ENCODE measurements at regions of chr2 and their contacts with region 1.

Region 1: DNA sequence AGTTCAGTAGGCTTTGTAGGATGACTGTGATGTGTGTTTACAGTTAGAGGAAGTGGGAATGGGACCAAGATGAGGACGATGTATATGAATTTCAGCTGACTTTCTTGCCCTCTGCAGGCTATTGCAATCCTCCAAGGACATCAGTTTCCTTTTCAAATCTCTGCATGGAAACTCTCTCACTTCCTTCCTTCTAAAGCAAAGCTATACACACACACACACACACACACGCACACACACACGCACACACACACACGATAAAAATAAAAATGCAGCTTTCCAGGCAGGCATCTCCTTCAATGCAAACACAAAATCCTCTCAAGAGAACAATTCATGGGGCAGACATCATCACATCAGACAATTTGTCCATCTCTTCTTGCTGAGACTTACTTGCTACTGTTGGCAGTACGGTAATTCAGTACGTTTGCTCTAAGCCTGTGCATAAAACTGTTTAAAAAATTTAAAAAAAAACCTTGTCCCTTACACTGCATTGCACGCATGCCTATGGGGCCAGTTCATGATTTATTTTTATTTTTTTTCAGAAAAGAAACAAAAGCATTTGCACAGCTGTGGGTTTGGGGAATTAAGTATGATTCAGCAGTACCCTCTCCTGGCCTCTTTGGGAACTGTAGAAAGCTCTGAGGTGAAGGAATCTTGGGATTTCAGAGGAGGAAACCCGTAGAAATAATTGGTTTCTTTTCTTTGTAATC is 27.1 kb upstream of the ICOS start:
- DNase-seq: peak in 1 of 2 experiments; percentile 10
- H3K4me3 ChIP-seq: no peak overlapping the region
- H3K27ac ChIP-seq: no peak overlapping the region
- H3K4me1 ChIP-seq: no peaks in the 10 kb centered on the region
- H3K27me3 ChIP-seq: no peaks in the 10 kb centered on the region
- CTCF ChIP-seq: peak; percentile 74

Region 2: DNA sequence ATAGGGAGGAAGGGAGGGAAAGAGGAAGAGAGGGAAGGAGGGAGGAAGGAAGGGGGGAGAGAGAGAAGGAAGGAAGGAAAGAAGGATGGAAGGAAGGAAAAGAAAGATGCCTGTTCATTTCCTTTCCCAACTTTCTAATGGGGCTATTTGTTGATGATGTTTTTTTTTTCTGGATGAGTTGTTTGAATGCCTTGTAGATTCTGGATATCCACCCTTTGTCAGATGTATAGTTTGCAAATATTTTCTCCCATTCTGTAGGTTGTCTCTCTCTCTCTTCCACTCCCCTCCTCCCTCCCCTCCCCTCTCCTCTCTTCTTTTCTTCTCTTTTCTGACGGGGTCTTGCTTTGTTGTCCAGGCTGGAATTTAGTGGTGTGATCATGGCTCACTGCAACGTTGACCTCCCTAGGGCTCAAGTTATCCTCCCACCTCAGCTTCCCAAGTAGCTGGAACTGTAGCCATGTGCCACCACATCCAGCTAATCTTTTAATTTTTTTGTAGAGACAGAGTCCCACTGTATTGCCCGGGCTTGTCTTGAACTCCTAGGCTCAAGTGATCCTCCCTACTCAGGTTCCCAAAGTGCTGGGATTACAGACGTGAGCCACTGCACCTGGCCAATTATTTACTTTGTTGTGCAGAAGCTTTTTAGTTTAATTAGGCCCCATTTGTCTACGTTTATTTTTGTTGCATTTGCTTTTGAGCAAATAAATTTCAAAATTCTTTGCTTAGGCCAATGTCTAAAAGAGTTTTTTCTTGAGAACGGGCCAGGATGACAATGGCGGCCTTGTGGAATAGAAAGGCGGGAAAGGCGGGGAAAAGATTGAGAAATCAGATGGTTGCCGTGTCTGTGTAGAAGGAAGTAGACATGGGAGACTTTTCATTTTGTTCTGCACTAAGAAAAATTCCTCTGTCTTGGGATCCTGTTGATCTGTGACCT is 1331.9 kb before region 1 on chr2:
- CTCF ChIA-PET with region 1: no interaction called
- POLR2A ChIA-PET with region 1: no interaction called
- intact Hi-C with region 1: loop called (anchors 10 kb)
- DNase-seq: no peak
- H3K4me3 ChIP-seq: no peak overlapping the region
- H3K27ac ChIP-seq: no peak overlapping the region
- H3K4me1 ChIP-seq: no peaks in the 10 kb centered on the region
- H3K27me3 ChIP-seq: no peaks in the 10 kb centered on the region
- CTCF ChIP-seq: no peak

Region 3: DNA sequence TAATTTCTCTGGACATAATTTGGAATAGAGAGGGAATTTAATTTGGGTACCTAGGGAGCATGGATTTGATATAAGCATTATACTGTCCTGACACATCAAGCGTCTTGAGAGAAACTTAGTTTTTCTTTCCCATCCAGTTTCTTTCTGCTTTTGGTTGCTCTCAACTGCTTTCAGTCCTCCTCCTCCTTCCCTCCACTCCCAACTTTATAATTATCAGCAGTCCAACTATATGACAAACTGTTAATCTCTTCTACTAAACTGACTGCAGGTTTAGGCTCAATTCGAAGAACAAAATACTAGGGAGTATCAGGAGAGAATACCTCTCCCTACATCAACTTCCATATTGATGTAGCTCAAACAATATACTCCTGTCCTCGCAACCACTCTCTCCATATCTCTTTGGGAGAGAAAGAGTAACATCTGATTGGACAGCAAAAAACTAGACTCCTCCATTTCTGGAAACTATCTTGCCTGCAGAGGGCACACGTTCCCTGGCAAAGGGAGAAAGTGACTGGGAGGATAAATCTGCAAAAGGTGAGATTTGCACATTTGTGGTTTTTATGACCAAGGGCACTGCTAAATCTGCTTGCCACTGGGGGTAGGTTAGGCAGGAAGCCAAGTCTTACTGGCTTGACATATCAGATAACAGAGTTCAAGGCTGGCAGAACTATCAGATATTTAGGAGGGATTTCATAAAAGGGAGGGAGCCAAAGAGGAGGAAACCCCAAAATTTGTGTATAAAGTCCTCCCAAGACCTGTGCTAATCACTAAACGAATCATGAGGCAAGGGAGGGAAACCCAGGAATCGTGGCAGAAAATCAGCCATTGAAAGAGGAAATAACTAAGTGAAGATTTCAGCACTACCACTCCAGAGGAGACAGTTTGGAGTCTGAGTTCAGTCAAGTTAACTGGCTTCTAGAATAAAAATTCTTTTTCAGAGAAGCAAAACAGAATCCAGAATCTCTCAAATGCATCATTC is 1077.9 kb before region 1 on chr2:
- CTCF ChIA-PET with region 1: no interaction called
- POLR2A ChIA-PET with region 1: no interaction called
- intact Hi-C with region 1: loop called (anchors 10 kb)
- DNase-seq: peak; percentile 29 to 47
- H3K4me3 ChIP-seq: no peak overlapping the region
- H3K27ac ChIP-seq: no peak overlapping the region
- H3K4me1 ChIP-seq: 0 out of 2 replicates have a peak, but pooled peaks cover 5% of the 10 kb centered on the region
- H3K27me3 ChIP-seq: no peaks in the 10 kb centered on the region
- CTCF ChIP-seq: peak; percentile 63

Region 4: GRCh38 chr2:203718087-203718486 is 191.3 kb before region 1 on chr2:
- CTCF ChIA-PET with region 1: no interaction called
- POLR2A ChIA-PET with region 1: no interaction called
- intact Hi-C with region 1: no loop called
- DNase-seq: no peak
- H3K4me3 ChIP-seq: no peak overlapping the region
- H3K27ac ChIP-seq: no peak overlapping the region
- H3K4me1 ChIP-seq: no peaks in the 10 kb centered on the region
- H3K27me3 ChIP-seq: no peaks in the 10 kb centered on the region
- CTCF ChIP-seq: no peak

Region 5: GRCh38 chr2:204089574-204089973 is 180.2 kb after region 1 on chr2:
- CTCF ChIA-PET with region 1: no interaction called
- POLR2A ChIA-PET with region 1: no interaction called
- intact Hi-C with region 1: no loop called
- DNase-seq: no peak
- H3K4me3 ChIP-seq: no peak overlapping the region
- H3K27ac ChIP-seq: no peak overlapping the region
- H3K4me1 ChIP-seq: no peaks in the 10 kb centered on the region
- H3K27me3 ChIP-seq: 0 out of 2 replicates have a peak, but pooled peaks cover 7% of the 10 kb centered on the region
- CTCF ChIP-seq: no peak

Measured in PC-9 (cell line).